Activated CD4-positive, alpha-beta memory T cell treated with anti-CD3 and anti-CD28 coated beads, Interleukin-2, amount 10 ng/mL, durations not matched to agents 7 days and 5 days (primary cell): ENCODE measurements at regions of chr7 and their contacts with region 1.

Region 1: GRCh38 chr7:121530227-121531174 is 134.4 kb upstream of the FAM3C start:
- DNase-seq: peak; percentile 83
- H3K4me3 Mint-ChIP-seq: peak overlapping the region; percentile 31
- H3K27ac Mint-ChIP-seq: peak overlapping the region; percentile 93
- H3K4me1 Mint-ChIP-seq: peaks cover 47% of the 10 kb centered on the region
- H3K27me3 Mint-ChIP-seq: no peaks in the 10 kb centered on the region

Region 2: GRCh38 chr7:121437456-121438127 is 92.9 kb before region 1 on chr7:
- CTCF ChIA-PET with region 1: interaction called, 10 read pairs
- POLR2A ChIA-PET with region 1: interaction called, 6 read pairs
- DNase-seq: no peak
- H3K4me3 Mint-ChIP-seq: no peak overlapping the region
- H3K27ac Mint-ChIP-seq: peak overlapping the region; percentile 86
- H3K4me1 Mint-ChIP-seq: peaks cover 48% of the 10 kb centered on the region
- H3K27me3 Mint-ChIP-seq: no peaks in the 10 kb centered on the region

Region 3: GRCh38 chr7:121485467-121486243 is 44.8 kb before region 1 on chr7:
- CTCF ChIA-PET with region 1: no interaction called
- POLR2A ChIA-PET with region 1: no interaction called
- DNase-seq: no peak
- H3K4me3 Mint-ChIP-seq: no peak overlapping the region
- H3K27ac Mint-ChIP-seq: no peak overlapping the region
- H3K4me1 Mint-ChIP-seq: peaks cover 5% of the 10 kb centered on the region
- H3K27me3 Mint-ChIP-seq: peaks cover 8% of the 10 kb centered on the region

Region 4: GRCh38 chr7:121547544-121548092 is 17.1 kb after region 1 on chr7:
- CTCF ChIA-PET with region 1: interaction called, 32 read pairs
- POLR2A ChIA-PET with region 1: interaction called, 60 read pairs
- DNase-seq: no peak
- H3K4me3 Mint-ChIP-seq: no peak overlapping the region
- H3K27ac Mint-ChIP-seq: no peak overlapping the region
- H3K4me1 Mint-ChIP-seq: peaks cover 50% of the 10 kb centered on the region
- H3K27me3 Mint-ChIP-seq: no peaks in the 10 kb centered on the region